Mammary epithelial cell (primary cell): ENCODE measurements at regions of chr1 and their contacts with region 1.

Region 1: DNA sequence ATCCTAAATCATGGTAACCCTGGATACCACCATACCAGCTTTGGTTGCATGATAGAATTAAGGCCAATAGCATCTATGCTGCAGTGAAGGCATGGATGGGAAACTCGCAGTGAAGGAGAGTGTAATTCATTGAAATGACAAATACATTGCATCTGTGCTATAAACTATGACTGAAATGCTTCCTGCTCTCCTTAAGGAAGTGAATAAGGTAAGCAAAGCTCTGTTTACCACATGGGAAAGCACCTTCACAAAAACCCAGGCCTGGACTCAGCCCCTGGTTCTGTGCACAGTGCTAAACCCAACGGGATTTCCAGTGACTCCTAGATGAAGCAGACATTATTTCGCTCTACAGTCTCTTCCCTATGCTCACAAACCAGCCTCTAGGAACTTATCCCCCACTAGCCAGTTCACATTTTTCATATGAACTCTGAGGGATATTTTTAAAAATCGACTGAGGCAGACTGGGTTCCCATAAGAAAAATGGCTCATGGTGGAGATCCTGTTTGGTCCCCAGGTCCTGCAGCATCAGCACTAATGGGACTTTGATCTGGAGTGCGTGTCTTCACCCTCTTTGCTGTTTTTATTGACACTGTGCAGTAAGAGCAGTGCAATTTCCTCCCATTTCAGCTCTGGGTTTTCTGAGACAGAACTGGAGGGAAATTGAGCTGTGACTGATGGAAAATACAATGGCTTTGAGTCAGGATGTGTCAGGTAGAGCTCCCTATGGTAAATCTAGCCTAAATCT is 362.7 kb downstream of the SIPA1L2 start:
- DNase-seq: no peak
- H3K4me3 ChIP-seq: no peak overlapping the region
- H3K27ac ChIP-seq: no peak overlapping the region
- H3K4me1 ChIP-seq: no peaks in the 10 kb centered on the region
- H3K27me3 ChIP-seq: peaks cover 4% of the 10 kb centered on the region
- CTCF ChIP-seq: no peak

Region 2: GRCh38 chr1:231691618-231692259 is 575.5 kb before region 1 on chr1:
- CTCF ChIA-PET with region 1: no interaction called
- dilution Hi-C with region 1: no loop called
- in situ Hi-C with region 1: no loop called
- intact Hi-C with region 1: no loop called
- DNase-seq: peak; percentile 21
- H3K4me3 ChIP-seq: no peak overlapping the region
- H3K27ac ChIP-seq: no peak overlapping the region
- H3K4me1 ChIP-seq: no peaks in the 10 kb centered on the region
- H3K27me3 ChIP-seq: no peaks in the 10 kb centered on the region
- CTCF ChIP-seq: peak; percentile 67 to 71

Region 3: DNA sequence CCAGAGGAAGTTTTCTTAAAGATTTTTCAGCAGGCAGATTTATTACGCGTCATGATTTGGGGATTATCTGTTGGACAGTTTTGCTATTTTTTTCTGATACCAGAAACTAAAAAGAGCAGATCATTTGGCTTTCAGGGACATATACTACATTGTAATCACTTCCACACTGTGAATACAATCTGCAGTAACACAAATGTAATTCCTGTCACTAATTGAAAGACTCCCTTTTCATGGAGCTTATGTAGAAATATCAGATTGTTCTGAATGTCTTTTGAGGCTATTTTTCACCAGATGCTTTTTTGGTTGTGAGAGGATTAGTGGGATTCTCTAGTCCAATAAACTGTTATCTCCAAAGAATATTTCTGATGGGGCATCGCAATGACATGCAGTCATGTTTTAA is 176.4 kb before region 1 on chr1:
- CTCF ChIA-PET with region 1: no interaction called
- dilution Hi-C with region 1: no loop called
- in situ Hi-C with region 1: no loop called
- intact Hi-C with region 1: no loop called
- DNase-seq: no peak
- H3K4me3 ChIP-seq: no peak overlapping the region
- H3K27ac ChIP-seq: no peak overlapping the region
- H3K4me1 ChIP-seq: no peaks in the 10 kb centered on the region
- H3K27me3 ChIP-seq: no peaks in the 10 kb centered on the region
- CTCF ChIP-seq: no peak

Region 4: DNA sequence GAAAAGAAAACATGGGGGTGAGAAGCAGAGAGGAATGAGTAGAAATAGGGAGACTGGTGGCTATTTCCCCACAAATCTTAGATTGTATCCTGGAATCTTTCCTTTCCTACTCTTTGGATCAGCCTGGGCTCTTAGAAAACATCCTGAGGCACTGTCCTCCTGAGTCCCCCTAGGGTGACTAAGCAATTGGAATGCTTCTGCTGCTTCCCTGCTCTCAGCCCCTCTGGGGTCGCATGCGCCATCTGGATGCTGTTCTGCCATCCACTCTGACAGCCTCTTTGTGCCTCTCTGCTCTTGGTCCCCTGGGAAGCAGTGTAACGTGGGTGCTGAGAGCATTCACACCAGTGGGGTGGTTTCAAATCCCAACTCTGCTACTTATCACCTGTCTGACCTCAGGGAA is 80.3 kb before region 1 on chr1:
- CTCF ChIA-PET with region 1: no interaction called
- dilution Hi-C with region 1: loop called (anchors 5 kb)
- in situ Hi-C with region 1: no loop called
- intact Hi-C with region 1: no loop called
- DNase-seq: no peak
- H3K4me3 ChIP-seq: no peak overlapping the region
- H3K27ac ChIP-seq: no peak overlapping the region
- H3K4me1 ChIP-seq: no peaks in the 10 kb centered on the region
- H3K27me3 ChIP-seq: no peaks in the 10 kb centered on the region
- CTCF ChIP-seq: no peak

Region 5: GRCh38 chr1:232305050-232305449 is 37.8 kb after region 1 on chr1:
- CTCF ChIA-PET with region 1: no interaction called
- dilution Hi-C with region 1: no loop called
- in situ Hi-C with region 1: no loop called
- intact Hi-C with region 1: no loop called
- DNase-seq: no peak
- H3K4me3 ChIP-seq: no peak overlapping the region
- H3K27ac ChIP-seq: no peak overlapping the region
- H3K4me1 ChIP-seq: no peaks in the 10 kb centered on the region
- H3K27me3 ChIP-seq: no peaks in the 10 kb centered on the region
- CTCF ChIP-seq: no peak

Region 6: GRCh38 chr1:232630047-232630893 is 363.0 kb after region 1 on chr1 and contains the start of gene SIPA1L2:
- CTCF ChIA-PET with region 1: no interaction called
- dilution Hi-C with region 1: no loop called
- in situ Hi-C with region 1: no loop called
- intact Hi-C with region 1: no loop called
- DNase-seq: peak; percentile 88
- H3K4me3 ChIP-seq: peak within 1 kb of the TSS; percentile 64 to 83 (median 77)
- H3K27ac ChIP-seq: no peak within 1 kb of the TSS
- H3K4me1 ChIP-seq: peaks cover 16% of the 10 kb centered on the region
- H3K27me3 ChIP-seq: no peaks in the 10 kb centered on the region
- CTCF ChIP-seq: peak; percentile 37 to 74
- total RNA-seq, gene SIPA1L2: 3.8 to 19.8 TPM